Breast epithelium (tissue), 4 donors: ENCODE measurements at regions of chr9 and their contacts with region 1.

Region 1: DNA sequence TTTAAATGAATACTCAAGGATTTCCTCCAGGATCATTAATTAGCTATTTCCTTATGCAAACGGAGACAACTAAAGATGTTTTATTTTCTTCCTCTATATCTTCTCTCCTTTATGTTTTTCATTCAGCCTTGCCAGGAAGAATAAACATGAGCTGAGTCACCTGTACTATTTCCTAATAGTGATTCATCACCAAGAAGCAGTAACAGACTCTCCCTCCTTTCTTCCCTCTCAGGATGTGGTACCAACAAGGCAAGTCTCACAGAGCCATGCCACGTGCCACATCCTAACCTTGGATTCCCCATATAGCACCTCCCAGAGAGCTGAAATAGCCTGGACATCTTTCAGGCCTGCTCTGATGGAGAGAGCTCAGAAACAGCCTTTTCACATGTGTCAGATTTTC is 758.6 kb upstream of the DMAC1 start:
- DNase-seq: no peak
- H3K4me3 ChIP-seq: no peak overlapping the region
- H3K27ac ChIP-seq: no peak overlapping the region
- H3K4me1 ChIP-seq: no peaks in the 10 kb centered on the region
- H3K27me3 ChIP-seq: no peaks in the 10 kb centered on the region
- CTCF ChIP-seq: no peak
- POLR2A ChIP-seq: no peak

Region 2: DNA sequence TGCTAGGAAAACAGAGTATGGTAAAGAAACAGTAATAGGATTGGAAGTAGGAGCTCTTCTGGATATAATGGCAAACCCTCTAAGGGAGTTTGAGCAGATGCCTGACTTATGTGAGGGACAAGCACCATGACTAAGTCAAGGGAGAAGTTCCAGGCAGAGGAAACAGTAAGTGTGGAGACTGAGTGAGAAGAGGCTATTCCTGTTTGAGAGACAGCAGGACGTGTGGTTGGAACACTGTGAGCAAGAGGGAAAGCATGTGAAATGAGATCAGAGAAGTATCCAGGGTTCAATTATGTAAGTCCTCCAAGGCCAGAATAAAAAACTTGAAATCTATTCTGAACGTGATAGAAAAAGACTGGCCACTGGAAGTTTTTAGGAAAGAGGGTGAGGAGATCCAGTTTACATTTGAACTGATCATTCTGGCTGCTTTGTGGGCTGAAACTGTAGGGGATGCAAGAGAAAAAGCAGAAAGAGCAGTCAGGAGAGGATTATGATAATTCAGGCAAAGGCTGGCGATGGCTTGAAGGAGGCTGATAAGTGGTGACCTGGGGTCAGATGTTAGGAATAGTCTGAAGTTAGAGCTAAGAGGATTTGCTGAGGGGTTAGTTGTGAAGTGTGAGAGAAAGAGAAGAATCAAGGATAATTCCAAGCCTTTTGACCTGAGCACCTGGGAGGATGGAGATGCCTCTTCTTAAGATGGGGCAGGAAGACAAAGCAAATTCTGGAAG is 777.8 kb before region 1 on chr9:
- intact Hi-C with region 1: no loop called
- DNase-seq: no peak
- H3K4me3 ChIP-seq: no peak overlapping the region
- H3K27ac ChIP-seq: no peak overlapping the region
- H3K4me1 ChIP-seq: no peaks in the 10 kb centered on the region
- H3K27me3 ChIP-seq: no peaks in the 10 kb centered on the region
- CTCF ChIP-seq: no peak
- POLR2A ChIP-seq: no peak

Region 3: DNA sequence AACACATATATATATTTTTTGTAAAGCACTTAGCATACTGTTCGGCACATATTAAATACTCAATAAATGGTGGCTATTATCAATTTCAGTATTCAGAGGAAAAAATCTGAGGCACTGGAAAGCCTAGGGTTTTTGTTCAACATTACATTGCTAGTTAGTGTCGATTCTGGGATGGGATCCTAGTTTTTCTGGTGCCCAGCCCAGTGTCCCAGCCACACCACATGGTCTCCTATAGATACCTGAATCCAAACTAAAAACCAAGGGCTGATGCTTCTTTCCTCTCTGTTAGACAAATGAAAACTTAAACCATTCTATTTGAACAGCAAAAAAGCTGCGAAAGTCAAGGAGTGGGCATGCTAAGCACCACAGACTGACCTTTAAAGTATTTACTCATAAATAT is 52.1 kb after region 1 on chr9:
- intact Hi-C with region 1: loop called (anchors 2 kb)
- DNase-seq: no peak
- H3K4me3 ChIP-seq: no peak overlapping the region
- H3K27ac ChIP-seq: no peak overlapping the region
- H3K4me1 ChIP-seq: no peaks in the 10 kb centered on the region
- H3K27me3 ChIP-seq: no peaks in the 10 kb centered on the region
- CTCF ChIP-seq: no peak
- POLR2A ChIP-seq: no peak